ENCODE measurements at regions of chr9 and their contacts with region 1.

Region 1: DNA sequence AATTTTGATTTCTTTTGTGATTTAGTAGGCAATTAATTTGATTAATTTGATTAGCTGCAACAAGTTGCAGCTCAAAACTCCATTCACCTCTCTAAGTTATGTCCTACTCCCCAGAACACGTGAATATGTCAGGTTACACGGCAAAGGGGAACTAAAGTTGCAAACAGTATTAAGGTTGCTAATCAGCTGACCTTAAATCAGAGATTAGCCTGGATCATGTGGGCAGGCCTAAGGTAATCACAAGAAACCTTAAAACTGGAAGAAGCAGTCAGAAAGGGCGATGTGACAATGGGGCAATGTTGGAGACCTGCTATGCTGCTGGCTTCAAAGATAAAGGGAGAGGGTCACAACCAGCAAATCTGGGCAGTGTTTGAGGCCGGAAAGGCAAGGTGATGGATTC is 47.3 kb upstream of the ANXA1 start:
- DNase-seq: no peak
- ATAC-seq: no peak
- H3K4me3 Mint-ChIP-seq: no peak overlapping the region
- H3K27ac Mint-ChIP-seq: no peak overlapping the region
- H3K4me1 Mint-ChIP-seq: no peaks in the 10 kb centered on the region
- H3K27me3 Mint-ChIP-seq: peaks cover 1% of the 10 kb centered on the region
- CTCF ChIP-seq: no peak

Region 2: DNA sequence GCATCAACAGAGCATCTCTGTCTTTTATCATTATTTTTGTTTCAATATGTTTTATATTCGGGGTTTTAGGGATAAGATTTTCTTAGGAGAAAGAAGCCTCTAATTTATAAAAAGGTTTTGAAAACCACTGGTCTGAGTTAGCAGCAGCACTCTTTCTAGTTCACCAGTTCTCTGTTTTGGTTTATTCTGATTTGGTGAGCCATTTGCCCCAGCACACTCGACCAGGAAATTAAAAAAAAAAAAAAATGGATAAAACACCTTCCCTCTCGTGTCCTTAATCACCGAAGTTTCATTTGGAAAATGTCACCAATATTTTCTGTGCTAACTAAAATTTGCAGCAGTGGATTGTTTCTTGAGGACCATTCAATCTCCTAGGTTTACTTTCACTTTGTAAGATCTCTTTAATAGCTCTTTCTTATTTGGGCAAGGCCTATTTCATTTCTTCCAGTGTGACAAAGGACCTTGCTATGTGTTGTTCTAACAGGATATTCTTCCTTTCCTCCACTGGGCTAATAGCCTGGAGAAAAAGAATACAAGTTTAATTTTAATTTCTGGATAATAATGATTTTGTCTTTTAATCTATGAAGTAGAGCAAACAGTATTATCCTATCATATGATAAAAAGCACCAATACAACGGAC is 10.5 kb before region 1 on chr9:
- CTCF ChIA-PET with region 1: interaction called, 17 read pairs
- POLR2A ChIA-PET with region 1: no interaction called
- intact Hi-C with region 1: no loop called
- DNase-seq: no peak
- ATAC-seq: no peak
- H3K4me3 Mint-ChIP-seq: peak overlapping the region; percentile 45
- H3K27ac Mint-ChIP-seq: no peak overlapping the region
- H3K4me1 Mint-ChIP-seq: peaks cover 3% of the 10 kb centered on the region
- H3K27me3 Mint-ChIP-seq: peaks cover 7% of the 10 kb centered on the region
- CTCF ChIP-seq: no peak

Region 3: DNA sequence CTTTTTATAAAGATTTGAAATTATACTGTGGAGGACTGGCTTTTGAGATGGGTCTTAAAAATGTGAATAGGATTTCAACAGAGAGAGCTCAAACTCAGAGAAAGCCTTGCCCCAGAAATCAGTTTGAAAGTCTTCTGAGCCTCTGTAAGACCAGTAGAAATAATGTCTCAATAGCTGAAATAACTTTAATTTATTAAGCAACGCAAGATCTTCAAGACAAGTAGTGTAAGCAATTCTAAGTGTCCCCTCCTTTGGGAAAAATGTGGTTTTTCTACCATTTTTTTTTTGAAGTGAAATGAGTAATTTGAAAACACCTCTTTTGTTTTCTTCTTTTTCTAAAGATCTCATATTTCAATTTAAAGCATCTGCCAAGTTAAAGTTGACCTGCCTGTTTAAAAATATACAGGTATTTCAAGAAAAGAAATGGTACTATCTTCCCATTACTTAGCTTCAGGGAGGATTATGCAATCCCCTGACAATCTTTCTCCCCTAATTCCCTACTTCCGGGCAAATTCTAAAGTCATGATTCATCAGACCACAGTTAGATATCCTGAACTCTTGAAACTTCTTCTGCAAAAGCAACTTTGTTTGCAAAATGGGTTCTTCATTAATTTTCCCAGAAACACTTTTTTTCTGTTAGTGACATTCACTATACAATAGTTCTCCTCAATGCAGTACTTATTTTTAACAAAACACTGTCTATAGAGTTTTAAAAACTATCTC is 39.4 kb after region 1 on chr9:
- CTCF ChIA-PET with region 1: interaction called, 13 read pairs
- POLR2A ChIA-PET with region 1: no interaction called
- intact Hi-C with region 1: no loop called
- DNase-seq: no peak
- ATAC-seq: no peak
- H3K4me3 Mint-ChIP-seq: no peak overlapping the region
- H3K27ac Mint-ChIP-seq: peak overlapping the region; percentile 23
- H3K4me1 Mint-ChIP-seq: peaks cover 38% of the 10 kb centered on the region
- H3K27me3 Mint-ChIP-seq: no peaks in the 10 kb centered on the region
- CTCF ChIP-seq: no peak

Region 4: GRCh38 chr9:73154760-73155159 is 50.4 kb after region 1 on chr9:
- CTCF ChIA-PET with region 1: interaction called, 10 read pairs
- POLR2A ChIA-PET with region 1: no interaction called
- intact Hi-C with region 1: no loop called
- DNase-seq: peak; percentile 27
- ATAC-seq: peak; percentile 61
- H3K4me3 Mint-ChIP-seq: peak overlapping the region; percentile 71
- H3K27ac Mint-ChIP-seq: peak overlapping the region; percentile 93
- H3K4me1 Mint-ChIP-seq: peaks cover 79% of the 10 kb centered on the region
- H3K27me3 Mint-ChIP-seq: no peaks in the 10 kb centered on the region
- CTCF ChIP-seq: no peak

Region 5: GRCh38 chr9:73183917-73184861 is 79.8 kb after region 1 on chr9:
- CTCF ChIA-PET with region 1: interaction called, 81 read pairs
- POLR2A ChIA-PET with region 1: no interaction called
- intact Hi-C with region 1: loop called (anchors 1 kb)
- DNase-seq: no peak
- ATAC-seq: no peak
- H3K4me3 Mint-ChIP-seq: no peak overlapping the region
- H3K27ac Mint-ChIP-seq: no peak overlapping the region
- H3K4me1 Mint-ChIP-seq: peaks cover 15% of the 10 kb centered on the region
- H3K27me3 Mint-ChIP-seq: peaks cover 7% of the 10 kb centered on the region
- CTCF ChIP-seq: peak; percentile 63